ENCODE measurements at regions of chr11 and their contacts with region 1.

Region 1: DNA sequence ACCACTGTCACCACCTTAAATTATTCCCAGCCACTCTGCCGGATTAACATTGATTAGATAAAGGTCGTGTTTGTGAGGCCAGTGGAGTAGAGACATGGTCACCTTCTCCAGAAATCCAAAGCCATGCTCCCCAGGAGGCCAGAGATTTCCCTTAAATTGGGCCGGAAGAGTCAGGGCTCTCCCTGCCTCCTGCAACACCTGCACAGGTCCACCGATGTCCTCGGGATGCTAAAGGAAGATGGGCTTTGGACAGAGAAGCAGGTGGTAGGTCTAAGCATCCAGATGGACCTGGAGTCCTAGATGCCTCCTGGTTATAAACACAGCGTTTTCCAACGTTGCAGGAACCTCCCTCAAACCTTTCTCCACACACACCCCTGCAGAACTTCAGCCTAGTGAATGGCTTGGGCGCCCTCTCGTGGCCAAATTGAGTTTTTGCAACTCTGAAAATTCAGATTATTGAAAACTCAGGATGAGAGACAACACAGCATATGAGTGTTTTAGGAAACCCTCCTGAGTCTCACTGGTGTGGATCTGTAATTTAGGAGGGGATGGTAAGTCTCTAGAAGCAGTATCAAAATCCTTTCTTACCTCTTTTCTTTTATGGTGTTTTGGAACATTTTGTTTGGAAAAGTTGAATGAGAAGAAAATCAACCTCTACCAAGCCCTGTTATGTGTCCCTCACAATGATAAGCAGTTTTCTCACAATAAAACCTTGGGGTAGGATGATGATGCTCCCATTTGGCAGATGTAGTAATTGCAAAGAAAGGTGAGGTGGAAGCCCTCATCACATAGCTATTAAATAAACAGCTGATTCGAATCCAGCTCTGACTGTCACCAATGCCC is 109.6 kb downstream of the RRAS2 start:
- DNase-seq: no peak
- H3K4me3 ChIP-seq: no peak overlapping the region
- H3K27ac ChIP-seq: no peak overlapping the region
- H3K4me1 ChIP-seq: peaks cover 0 to 7% (median 0%) of the 10 kb centered on the region in 4 donors
- H3K27me3 ChIP-seq: peaks cover 0 to 10% (median 0%) of the 10 kb centered on the region in 4 donors
- CTCF ChIP-seq: peak; percentile 78 to 87 (median 85)
- EP300 ChIP-seq: no peak
- POLR2A ChIP-seq: no peak

Region 2: GRCh38 chr11:13772223-13773046 is 476.9 kb before region 1 on chr11:
- intact Hi-C with region 1: loop called (anchors 5 kb)
- DNase-seq: no peak
- H3K4me3 ChIP-seq: no peak overlapping the region
- H3K27ac ChIP-seq: no peak overlapping the region
- H3K4me1 ChIP-seq: no peaks in the 10 kb centered on the region
- H3K27me3 ChIP-seq: peaks cover 0 to 21% (median 0%) of the 10 kb centered on the region in 4 donors
- CTCF ChIP-seq: peak in 2 of 3 experiments; percentile 18 to 28
- EP300 ChIP-seq: no peak
- POLR2A ChIP-seq: no peak

Region 3: DNA sequence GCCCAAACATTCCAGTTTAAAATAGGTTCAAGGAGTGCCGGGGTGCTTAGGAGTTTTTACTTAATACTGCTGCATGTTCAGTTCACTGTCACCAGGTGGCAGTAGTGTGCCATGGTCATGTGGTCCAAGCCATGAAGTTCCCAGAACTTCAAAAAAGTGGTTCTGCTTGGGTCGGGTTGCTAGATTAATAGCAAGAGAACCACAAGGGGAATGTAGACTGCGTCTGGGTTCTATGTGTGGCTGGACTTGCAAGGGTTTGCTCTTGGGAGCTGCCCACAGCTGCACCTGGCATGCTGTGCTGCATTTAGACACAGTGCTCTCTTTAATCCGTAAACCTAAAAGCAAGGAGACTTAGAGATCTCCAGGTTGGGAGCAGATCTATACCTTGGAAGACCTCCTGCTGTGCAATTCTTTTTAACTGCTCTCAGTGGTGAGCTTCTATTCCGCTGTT is 293.3 kb before region 1 on chr11:
- intact Hi-C with region 1: loop called (anchors 1 kb)
- DNase-seq: no peak
- H3K4me3 ChIP-seq: no peak overlapping the region
- H3K27ac ChIP-seq: no peak overlapping the region
- H3K4me1 ChIP-seq: peaks cover 0 to 4% (median 2%) of the 10 kb centered on the region in 4 donors
- H3K27me3 ChIP-seq: peaks cover 0 to 8% (median 0%) of the 10 kb centered on the region in 4 donors
- CTCF ChIP-seq: peak; percentile 87 to 91 (median 91)
- EP300 ChIP-seq: no peak
- POLR2A ChIP-seq: no peak

Region 4: GRCh38 chr11:14148653-14149273 is 100.6 kb before region 1 on chr11:
- intact Hi-C with region 1: loop called (anchors 5 kb)
- DNase-seq: no peak
- H3K4me3 ChIP-seq: no peak overlapping the region
- H3K27ac ChIP-seq: no peak overlapping the region
- H3K4me1 ChIP-seq: no peaks in the 10 kb centered on the region
- H3K27me3 ChIP-seq: no peaks in the 10 kb centered on the region
- CTCF ChIP-seq: peak; percentile 63 to 68 (median 65)
- EP300 ChIP-seq: no peak
- POLR2A ChIP-seq: no peak